Mammary epithelial cell (primary cell): ENCODE measurements at regions of chr4 and their contacts with region 1.

Region 1: GRCh38 chr4:7843831-7844593 is 95.6 kb downstream of the AFAP1 start:
- DNase-seq: no peak
- H3K4me3 ChIP-seq: no peak overlapping the region
- H3K27ac ChIP-seq: peak overlapping the region; percentile 98
- H3K4me1 ChIP-seq: peaks cover 46% of the 10 kb centered on the region
- H3K27me3 ChIP-seq: no peaks in the 10 kb centered on the region
- CTCF ChIP-seq: peak; percentile 53 to 55

Region 2: DNA sequence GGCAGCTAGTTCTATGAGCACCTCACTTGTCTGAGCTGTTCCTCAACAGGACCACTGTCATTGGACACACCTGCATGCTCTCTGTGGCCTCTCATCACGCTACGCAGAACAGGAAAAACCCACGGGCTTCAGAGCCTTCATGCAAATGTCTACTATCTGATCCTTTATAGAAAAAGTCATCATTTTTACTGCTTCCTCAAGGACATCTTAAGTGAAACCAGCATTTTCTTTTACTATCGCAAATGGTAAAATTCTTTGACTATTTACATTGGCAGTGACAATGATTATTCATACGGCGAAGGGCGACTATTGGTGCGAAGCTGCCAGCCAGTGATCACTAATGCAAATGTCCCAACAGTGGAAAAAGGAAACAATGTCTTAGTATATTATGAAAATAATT is 51.4 kb before region 1 on chr4:
- CTCF ChIA-PET with region 1: no interaction called
- dilution Hi-C with region 1: no loop called
- in situ Hi-C with region 1: no loop called
- intact Hi-C with region 1: no loop called
- DNase-seq: no peak
- H3K4me3 ChIP-seq: no peak overlapping the region
- H3K27ac ChIP-seq: no peak overlapping the region
- H3K4me1 ChIP-seq: no peaks in the 10 kb centered on the region
- H3K27me3 ChIP-seq: no peaks in the 10 kb centered on the region
- CTCF ChIP-seq: no peak

Region 3: DNA sequence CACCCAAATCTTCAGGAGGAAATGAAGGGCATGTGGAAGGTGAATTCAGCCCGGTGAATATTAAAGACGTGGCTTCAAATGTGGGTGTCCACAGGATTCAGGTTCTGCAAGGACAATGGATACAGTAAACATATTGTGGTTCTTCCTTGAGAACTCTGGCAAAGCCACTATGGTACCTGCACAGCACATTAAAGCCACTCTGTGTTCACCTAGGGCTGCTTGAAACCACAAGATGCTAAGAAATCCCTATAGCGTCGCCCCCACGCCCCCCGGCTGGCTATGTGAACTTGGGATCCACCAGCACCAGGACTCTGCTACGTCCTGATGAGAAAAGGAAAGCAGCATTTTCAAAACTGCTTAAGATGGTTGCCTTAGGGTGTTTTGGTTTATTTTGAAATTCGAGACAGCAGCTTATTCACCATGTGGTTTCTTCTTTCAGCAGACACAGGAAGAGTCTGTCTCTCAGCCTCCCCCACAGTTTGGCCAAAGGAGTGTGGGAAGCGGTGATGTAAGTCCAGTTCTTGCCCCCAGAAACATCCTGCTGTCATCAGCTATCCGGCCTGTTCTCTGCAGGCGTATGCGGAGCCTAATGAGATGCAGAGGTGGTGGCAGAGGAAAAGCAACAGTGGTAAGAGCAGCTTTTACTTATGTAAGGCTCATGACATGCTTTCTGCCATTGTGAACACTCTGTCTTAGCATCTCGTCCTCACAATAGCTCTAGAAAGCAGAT is 15.9 kb before region 1 on chr4:
- CTCF ChIA-PET with region 1: no interaction called
- dilution Hi-C with region 1: no loop called
- in situ Hi-C with region 1: no loop called
- intact Hi-C with region 1: loop called (anchors 1 kb)
- DNase-seq: peak; percentile 96
- H3K4me3 ChIP-seq: peak overlapping the region in 1 of 3 experiments; percentile 1
- H3K27ac ChIP-seq: peak overlapping the region; percentile 73
- H3K4me1 ChIP-seq: peaks cover 22% of the 10 kb centered on the region
- H3K27me3 ChIP-seq: no peaks in the 10 kb centered on the region
- CTCF ChIP-seq: no peak

Region 4: GRCh38 chr4:7861440-7861881 is 17.4 kb after region 1 on chr4:
- CTCF ChIA-PET with region 1: no interaction called
- dilution Hi-C with region 1: no loop called
- in situ Hi-C with region 1: no loop called
- intact Hi-C with region 1: loop called (anchors 1 kb)
- DNase-seq: peak; percentile 80
- H3K4me3 ChIP-seq: no peak overlapping the region
- H3K27ac ChIP-seq: peak overlapping the region; percentile 82
- H3K4me1 ChIP-seq: peaks cover 44% of the 10 kb centered on the region
- H3K27me3 ChIP-seq: no peaks in the 10 kb centered on the region
- CTCF ChIP-seq: no peak

Region 5: DNA sequence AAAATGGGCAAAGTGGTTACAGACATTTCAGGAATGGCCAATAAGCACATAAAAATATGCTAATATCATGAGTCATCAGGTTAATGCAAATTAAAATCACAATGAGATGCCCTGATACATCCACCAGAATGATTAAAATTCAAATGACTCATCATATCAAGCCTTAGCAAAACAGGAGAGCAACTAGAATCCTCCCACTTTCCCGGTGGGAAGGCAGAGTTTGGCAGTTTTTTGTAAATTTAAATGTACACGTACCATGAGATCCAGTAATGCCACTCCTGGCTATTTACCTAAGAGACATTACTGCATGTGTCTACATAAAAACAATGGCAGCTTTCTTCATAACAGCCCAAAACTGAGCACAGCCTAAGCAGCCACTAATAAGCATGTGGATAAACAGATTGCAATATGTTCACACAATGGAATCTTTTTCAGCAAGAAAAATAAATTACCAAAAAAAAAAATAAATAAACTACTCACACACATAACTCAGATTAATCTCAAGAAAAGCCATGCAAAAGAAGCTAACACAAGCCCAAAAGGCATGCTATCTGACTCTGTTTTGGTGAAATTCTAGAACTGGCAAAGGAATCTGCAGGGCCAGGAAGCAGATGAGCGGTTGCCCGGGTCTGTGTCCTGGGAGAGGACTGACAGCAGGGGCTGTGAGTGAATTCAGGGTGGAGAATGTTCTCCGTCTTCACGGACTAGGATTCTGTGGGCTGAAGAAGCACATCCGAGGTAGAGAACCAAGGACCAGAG is 46.8 kb after region 1 on chr4:
- CTCF ChIA-PET with region 1: no interaction called
- dilution Hi-C with region 1: loop called (anchors 5 kb)
- in situ Hi-C with region 1: no loop called
- intact Hi-C with region 1: loop called (anchors 5 kb)
- DNase-seq: peak; percentile 80
- H3K4me3 ChIP-seq: no peak overlapping the region
- H3K27ac ChIP-seq: peak overlapping the region; percentile 80
- H3K4me1 ChIP-seq: peaks cover 60% of the 10 kb centered on the region
- H3K27me3 ChIP-seq: no peaks in the 10 kb centered on the region
- CTCF ChIP-seq: no peak

Region 6: GRCh38 chr4:7910952-7911578 is 67.1 kb after region 1 on chr4:
- CTCF ChIA-PET with region 1: no interaction called
- dilution Hi-C with region 1: no loop called
- in situ Hi-C with region 1: no loop called
- intact Hi-C with region 1: loop called (anchors 5 kb)
- DNase-seq: peak; percentile 65
- H3K4me3 ChIP-seq: no peak overlapping the region
- H3K27ac ChIP-seq: peak overlapping the region; percentile 42
- H3K4me1 ChIP-seq: peaks cover 30% of the 10 kb centered on the region
- H3K27me3 ChIP-seq: no peaks in the 10 kb centered on the region
- CTCF ChIP-seq: no peak

Region 7: DNA sequence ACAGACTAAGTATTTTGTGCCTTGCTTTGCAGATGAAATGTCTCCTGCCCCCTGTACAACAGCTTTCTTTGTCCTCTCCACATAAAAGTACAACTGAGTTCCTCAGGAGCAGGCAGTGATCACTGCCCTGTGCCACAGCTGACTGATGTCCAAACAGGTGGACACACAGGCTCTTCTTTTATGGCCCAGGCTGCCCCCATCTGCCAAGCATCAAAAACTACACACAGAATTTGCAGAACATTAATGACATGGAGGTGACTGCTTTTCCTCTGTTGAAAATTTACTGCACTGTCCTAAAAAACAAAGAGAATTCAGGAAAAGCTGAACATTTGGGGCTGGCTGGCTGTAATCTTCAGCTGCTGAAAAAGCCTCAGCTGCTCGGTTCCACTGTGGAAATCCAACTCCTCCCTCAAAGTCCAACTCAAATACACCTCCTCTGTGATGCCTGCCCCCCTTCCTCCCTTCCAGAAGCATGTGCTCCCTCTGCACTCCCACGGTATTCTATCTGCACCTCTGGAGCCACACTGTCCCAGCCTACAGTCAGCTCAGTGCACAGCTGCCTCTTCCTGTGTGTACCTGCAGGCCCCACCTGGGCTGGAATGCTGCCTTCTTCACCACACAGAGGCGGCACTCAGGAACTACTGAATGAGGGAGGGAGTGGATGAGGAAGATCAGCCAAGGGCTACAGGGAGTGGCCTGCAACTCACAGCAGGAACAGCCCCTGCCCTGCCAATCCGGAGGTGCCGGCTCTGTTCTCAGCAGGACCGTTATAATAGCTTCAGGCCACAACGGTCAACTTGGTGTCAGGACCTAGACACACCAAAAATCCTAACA is 85.3 kb after region 1 on chr4:
- CTCF ChIA-PET with region 1: interaction called, 5 read pairs
- dilution Hi-C with region 1: no loop called
- in situ Hi-C with region 1: no loop called
- intact Hi-C with region 1: loop called (anchors 2 kb)
- DNase-seq: peak; percentile 90
- H3K4me3 ChIP-seq: no peak overlapping the region
- H3K27ac ChIP-seq: peak overlapping the region; percentile 33
- H3K4me1 ChIP-seq: peaks cover 33% of the 10 kb centered on the region
- H3K27me3 ChIP-seq: no peaks in the 10 kb centered on the region
- CTCF ChIP-seq: peak in 1 of 2 donors; percentile 56

Region 8: GRCh38 chr4:7939377-7940108 is 95.5 kb after region 1 on chr4 and contains the start of gene AFAP1:
- CTCF ChIA-PET with region 1: interaction called, 3 read pairs
- dilution Hi-C with region 1: loop called (anchors 5 kb)
- in situ Hi-C with region 1: no loop called
- intact Hi-C with region 1: no loop called
- DNase-seq: peak; percentile 83
- H3K4me3 ChIP-seq: peak within 1 kb of the TSS; percentile 90 to 98 (median 93)
- H3K27ac ChIP-seq: peak within 1 kb of the TSS; percentile 72
- H3K4me1 ChIP-seq: peaks cover 11% of the 10 kb centered on the region
- H3K27me3 ChIP-seq: no peaks in the 10 kb centered on the region
- CTCF ChIP-seq: no peak
- total RNA-seq, gene AFAP1: 22.9 to 36.0 TPM

Region 9: DNA sequence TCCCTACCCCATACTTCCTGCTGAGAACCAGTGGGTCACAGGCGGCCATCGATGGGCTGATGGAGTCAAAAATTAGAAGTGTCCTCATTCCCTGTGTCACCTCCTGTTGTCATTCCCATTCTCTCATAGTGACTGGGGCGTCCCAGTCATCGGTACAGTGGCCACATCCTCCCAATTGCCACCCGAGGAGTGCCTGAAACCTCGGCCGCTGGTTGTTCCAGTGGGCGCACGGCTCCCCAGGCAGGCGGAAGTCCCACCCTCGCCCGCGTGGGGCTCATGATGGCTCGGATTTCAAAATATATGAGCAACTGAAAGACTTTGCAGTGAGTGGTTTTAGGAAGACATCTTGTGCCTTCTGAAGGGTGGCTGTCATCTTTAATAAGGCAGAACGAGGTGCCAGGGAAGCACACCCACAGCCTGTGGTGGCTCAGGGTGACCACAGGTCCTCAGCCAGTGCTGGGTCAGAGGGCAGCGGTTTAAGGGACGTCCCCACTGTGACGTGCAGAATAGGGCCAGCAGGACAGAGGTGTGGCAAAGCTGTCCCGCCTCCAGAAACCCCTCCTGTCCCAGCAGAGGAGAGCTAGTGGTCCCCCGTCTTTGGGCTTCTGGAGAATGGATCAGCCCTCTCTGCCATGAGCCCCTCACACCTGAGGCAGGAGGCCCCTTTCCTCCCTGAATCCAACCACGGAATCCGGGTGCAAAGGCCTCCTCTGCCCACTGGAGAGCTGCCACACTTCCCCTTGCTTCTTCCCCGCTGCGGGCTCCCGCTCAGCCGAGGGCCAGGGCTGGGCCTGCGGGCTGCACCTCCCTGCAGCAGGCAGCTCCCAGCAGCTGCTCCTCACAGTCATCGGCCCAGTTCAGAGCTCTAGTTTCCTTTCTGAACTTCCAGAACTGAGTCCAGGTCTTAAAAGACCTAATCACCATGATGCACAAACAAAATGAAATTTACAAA is 224.2 kb after region 1 on chr4:
- CTCF ChIA-PET with region 1: no interaction called
- dilution Hi-C with region 1: no loop called
- in situ Hi-C with region 1: no loop called
- intact Hi-C with region 1: no loop called
- DNase-seq: no peak
- H3K4me3 ChIP-seq: no peak overlapping the region
- H3K27ac ChIP-seq: no peak overlapping the region
- H3K4me1 ChIP-seq: no peaks in the 10 kb centered on the region
- H3K27me3 ChIP-seq: peaks cover 11% of the 10 kb centered on the region
- CTCF ChIP-seq: no peak